ENCODE measurements at regions of chr12 and their contacts with region 1.

Region 1: GRCh38 chr12:44465139-44465538 is 411.0 kb downstream of the NELL2 start:
- DNase-seq: no peak
- H3K4me3 ChIP-seq: no peak overlapping the region
- H3K27ac ChIP-seq: no peak overlapping the region
- H3K4me1 ChIP-seq: no peaks in the 10 kb centered on the region
- H3K27me3 ChIP-seq: no peaks in the 10 kb centered on the region
- CTCF ChIP-seq: no peak
- POLR2A ChIP-seq: no peak

Region 2: DNA sequence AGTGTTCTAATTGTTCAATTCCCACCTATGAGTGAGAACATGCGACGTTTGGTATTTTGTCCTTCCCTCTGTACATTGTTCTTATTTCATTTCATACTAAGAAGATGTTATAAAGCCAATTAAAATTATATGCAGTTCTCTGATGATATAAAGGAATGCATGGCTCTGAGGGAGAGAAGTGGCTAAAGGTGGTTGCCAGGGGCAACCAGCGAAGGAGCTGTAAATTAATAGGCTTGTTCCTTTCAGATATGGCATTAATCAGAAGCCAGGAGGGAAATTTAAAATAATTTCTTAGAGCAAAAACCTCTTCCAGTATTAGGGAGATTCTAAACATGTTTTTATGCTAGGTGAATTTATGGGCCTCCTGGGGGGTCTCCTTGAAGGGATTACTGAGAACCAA is 401.5 kb before region 1 on chr12:
- intact Hi-C with region 1: no loop called
- DNase-seq: no peak
- H3K4me3 ChIP-seq: no peak overlapping the region
- H3K27ac ChIP-seq: no peak overlapping the region
- H3K4me1 ChIP-seq: no peaks in the 10 kb centered on the region
- H3K27me3 ChIP-seq: no peaks in the 10 kb centered on the region
- CTCF ChIP-seq: no peak
- POLR2A ChIP-seq: no peak

Region 3: DNA sequence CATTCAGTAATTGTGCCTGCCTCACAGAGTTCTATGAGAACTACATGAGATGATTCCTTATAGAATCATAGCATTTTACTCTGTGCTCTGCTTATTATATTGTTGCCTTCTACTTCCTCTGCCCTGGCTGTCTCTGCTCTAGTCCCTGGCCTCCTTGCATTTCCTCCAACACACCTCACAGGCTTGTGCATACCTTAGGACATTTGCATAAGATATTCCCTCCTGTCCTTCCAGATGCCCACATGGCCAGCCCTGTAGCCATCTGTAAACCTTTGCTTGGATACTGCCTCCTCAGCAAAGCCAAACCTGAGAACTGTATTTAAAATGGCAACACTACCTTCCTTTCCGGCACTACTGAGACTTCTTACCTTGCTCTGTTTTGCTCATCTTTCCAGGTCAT is 42.6 kb before region 1 on chr12:
- intact Hi-C with region 1: loop called (anchors 1 kb)
- DNase-seq: no peak
- H3K4me3 ChIP-seq: no peak overlapping the region
- H3K27ac ChIP-seq: no peak overlapping the region
- H3K4me1 ChIP-seq: no peaks in the 10 kb centered on the region
- H3K27me3 ChIP-seq: no peaks in the 10 kb centered on the region
- CTCF ChIP-seq: no peak
- POLR2A ChIP-seq: no peak

Measured in breast epithelium (tissue), 4 donors.